ENCODE measurements at regions of chr2 and their contacts with region 1.

Region 1: GRCh38 chr2:72887754-72888437 is 688 bp downstream of the SPR start:
- DNase-seq: no peak
- ATAC-seq: peak; percentile 68
- H3K4me3 ChIP-seq: peak overlapping the region; percentile 75
- H3K27ac ChIP-seq: no peak overlapping the region
- H3K4me1 ChIP-seq: peaks cover under 1% of the 10 kb centered on the region
- H3K27me3 ChIP-seq: peaks cover 2 to 10% of the 10 kb centered on the region in 2 experiments; a peak in 2 of 4 replicates
- CTCF ChIP-seq: peak; percentile 82 to 95 (median 93)
- EP300 ChIP-seq: no peak
- POLR2A ChIP-seq: no peak
- RAD21 ChIP-seq: 0 out of 2 replicates have a peak, but pooled peaks have one; percentile 26

Region 2: DNA sequence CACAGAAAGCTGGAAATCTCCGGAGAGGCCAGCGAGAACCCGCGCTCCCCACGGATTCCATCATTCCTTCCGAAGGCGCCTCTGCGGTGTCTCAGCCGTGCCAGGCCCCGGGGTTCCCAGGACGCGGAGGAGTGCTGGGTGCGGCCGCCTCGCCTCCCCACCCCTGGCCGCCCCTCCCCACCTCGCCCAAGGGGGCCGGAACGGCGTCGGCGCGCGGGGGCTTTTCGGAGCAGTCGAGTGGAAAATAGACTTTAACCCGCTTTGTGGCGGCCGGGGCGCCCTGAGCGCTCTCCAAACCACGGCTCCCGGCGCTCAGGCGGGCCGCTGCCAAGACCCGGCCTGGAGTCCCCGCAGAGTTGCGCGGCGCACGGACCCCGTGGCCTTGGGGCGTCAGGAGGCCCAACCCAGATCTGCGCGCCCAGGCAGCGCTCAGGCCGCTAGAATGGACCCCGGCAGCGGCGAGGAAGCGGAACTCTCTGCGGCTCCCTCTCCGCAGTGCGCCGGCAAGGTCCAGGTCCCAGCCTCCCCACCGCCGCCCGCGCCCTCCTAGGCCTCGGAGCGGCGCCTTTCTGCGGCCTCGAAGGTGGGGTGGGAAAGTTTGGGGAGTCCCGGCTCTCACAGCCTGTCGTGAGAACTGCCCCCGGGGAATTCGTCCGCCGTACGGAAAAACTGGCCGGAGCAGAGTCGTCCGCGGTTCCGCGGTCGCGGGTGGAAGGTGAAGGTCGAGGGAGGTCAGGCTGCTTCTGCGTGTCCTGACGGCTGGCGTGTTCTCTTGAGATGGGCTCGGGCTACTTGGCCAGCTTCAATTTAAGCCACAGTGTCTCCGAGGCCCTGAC is 28.2 kb after region 1 on chr2:
- CTCF ChIA-PET with region 1: interaction called, 106 read pairs
- POLR2A ChIA-PET with region 1: interaction called, 42 read pairs
- RAD21 ChIA-PET with region 1: interaction called, 88 read pairs
- SMC1A ChIA-PET with region 1: interaction called, 48 read pairs
- in situ Hi-C with region 1: no loop called
- intact Hi-C with region 1: loop called (anchors 2 kb)
- DNase-seq: no peak
- ATAC-seq: peak; percentile 85
- H3K4me3 ChIP-seq: peak overlapping the region; percentile 75
- H3K27ac ChIP-seq: peak overlapping the region; percentile 48
- H3K4me1 ChIP-seq: peaks cover 9% of the 10 kb centered on the region
- H3K27me3 ChIP-seq: peaks cover 8 to 52% of the 10 kb centered on the region in 2 experiments
- CTCF ChIP-seq: no peak
- EP300 ChIP-seq: peak in 1 of 2 experiments; percentile 28; a peak in 1 of 4 replicates
- POLR2A ChIP-seq: 0 out of 2 replicates have a peak, but pooled peaks have one; percentile 35
- RAD21 ChIP-seq: no peak

Region 3: GRCh38 chr2:72940786-72941185 is 52.9 kb after region 1 on chr2:
- CTCF ChIA-PET with region 1: interaction called, 117 read pairs
- POLR2A ChIA-PET with region 1: no interaction called
- RAD21 ChIA-PET with region 1: interaction called, 51 read pairs
- SMC1A ChIA-PET with region 1: interaction called, 39 read pairs
- in situ Hi-C with region 1: no loop called
- intact Hi-C with region 1: loop called (anchors 1 kb)
- DNase-seq: no peak
- ATAC-seq: no peak
- H3K4me3 ChIP-seq: no peak overlapping the region
- H3K27ac ChIP-seq: no peak overlapping the region
- H3K4me1 ChIP-seq: no peaks in the 10 kb centered on the region
- H3K27me3 ChIP-seq: no peaks in the 10 kb centered on the region
- CTCF ChIP-seq: no peak
- EP300 ChIP-seq: no peak
- POLR2A ChIP-seq: no peak
- RAD21 ChIP-seq: no peak

Region 4: DNA sequence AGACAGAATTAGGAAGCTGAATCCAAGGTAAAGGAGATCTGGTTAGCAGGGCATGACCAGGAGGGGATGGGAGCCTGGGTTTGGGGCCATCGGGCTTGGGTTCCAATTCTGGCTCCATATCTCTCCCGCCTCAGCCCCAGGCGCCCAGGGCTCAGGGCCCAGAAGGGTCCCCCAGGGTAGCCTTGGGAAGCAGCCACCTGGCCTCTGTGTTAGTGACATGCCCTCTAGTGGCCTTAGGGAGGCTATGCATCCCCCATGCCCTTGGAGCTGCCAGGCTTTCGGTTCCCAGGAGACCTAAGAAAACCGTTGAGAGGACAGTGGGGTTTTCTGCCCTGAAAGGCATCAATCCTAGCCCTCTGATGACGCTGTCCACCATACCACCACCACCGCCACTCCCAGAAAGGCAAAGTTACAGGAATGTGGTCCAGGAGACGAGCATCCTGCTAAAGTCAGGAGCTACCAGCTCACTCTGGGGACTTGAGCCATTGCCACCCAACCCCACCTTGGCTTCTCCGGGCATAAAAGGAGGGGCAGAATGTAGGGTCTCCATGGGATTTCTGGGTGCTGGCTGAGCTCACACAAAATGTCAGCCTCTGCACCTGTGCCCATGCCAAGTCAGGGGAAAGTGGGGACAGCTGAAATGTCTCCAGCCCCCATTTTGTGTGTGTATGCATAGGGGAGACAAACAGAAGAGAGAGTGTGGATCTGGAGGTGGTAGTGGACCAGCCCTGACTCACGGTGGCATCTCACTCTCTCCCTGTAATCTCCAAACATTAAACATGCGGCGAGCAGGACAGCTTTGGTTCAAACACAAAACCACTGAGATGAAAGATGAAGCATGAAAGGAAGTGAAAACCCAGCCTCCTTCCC is 85.9 kb after region 1 on chr2:
- CTCF ChIA-PET with region 1: interaction called, 437 read pairs
- POLR2A ChIA-PET with region 1: interaction called, 3 read pairs
- RAD21 ChIA-PET with region 1: interaction called, 182 read pairs
- SMC1A ChIA-PET with region 1: interaction called, 134 read pairs
- in situ Hi-C with region 1: loop called (anchors 5 kb)
- intact Hi-C with region 1: loop called (anchors 1 kb)
- DNase-seq: no peak
- ATAC-seq: peak; percentile 99
- H3K4me3 ChIP-seq: no peak overlapping the region
- H3K27ac ChIP-seq: no peak overlapping the region
- H3K4me1 ChIP-seq: no peaks in the 10 kb centered on the region
- H3K27me3 ChIP-seq: no peaks in the 10 kb centered on the region
- CTCF ChIP-seq: peak; percentile 85 to 95 (median 92)
- EP300 ChIP-seq: no peak
- POLR2A ChIP-seq: no peak
- RAD21 ChIP-seq: peak; percentile 75

Region 5: GRCh38 chr2:73163483-73164367 is 275.8 kb after region 1 on chr2:
- CTCF ChIA-PET with region 1: interaction called, 12 read pairs
- POLR2A ChIA-PET with region 1: no interaction called
- RAD21 ChIA-PET with region 1: interaction called, 7 read pairs
- SMC1A ChIA-PET with region 1: no interaction called
- in situ Hi-C with region 1: no loop called
- intact Hi-C with region 1: loop called (anchors 5 kb)
- DNase-seq: no peak
- ATAC-seq: peak; percentile 99
- H3K4me3 ChIP-seq: no peak overlapping the region
- H3K27ac ChIP-seq: no peak overlapping the region
- H3K4me1 ChIP-seq: no peaks in the 10 kb centered on the region
- H3K27me3 ChIP-seq: peaks cover 0 to 2% of the 10 kb centered on the region in 2 experiments; a peak in 1 of 4 replicates
- CTCF ChIP-seq: peak; percentile 85 to 91 (median 88)
- EP300 ChIP-seq: no peak
- POLR2A ChIP-seq: no peak
- RAD21 ChIP-seq: peak; percentile 83